ENCODE measurements at regions of chr12 and their contacts with region 1.

Region 1: GRCh38 chr12:42129595-42130204 is 15.0 kb downstream of the GXYLT1 start:
- DNase-seq: peak; percentile 31 to 60 (median 47)
- ATAC-seq: peak; percentile 82
- H3K4me3 ChIP-seq: no peak overlapping the region
- H3K27ac ChIP-seq: no peak overlapping the region
- H3K4me1 ChIP-seq: peaks cover 19% of the 10 kb centered on the region
- H3K27me3 ChIP-seq: no peaks in the 10 kb centered on the region
- CTCF ChIP-seq: peak; percentile 46 to 92 (median 85)
- POLR2A ChIP-seq: no peak

Region 2: DNA sequence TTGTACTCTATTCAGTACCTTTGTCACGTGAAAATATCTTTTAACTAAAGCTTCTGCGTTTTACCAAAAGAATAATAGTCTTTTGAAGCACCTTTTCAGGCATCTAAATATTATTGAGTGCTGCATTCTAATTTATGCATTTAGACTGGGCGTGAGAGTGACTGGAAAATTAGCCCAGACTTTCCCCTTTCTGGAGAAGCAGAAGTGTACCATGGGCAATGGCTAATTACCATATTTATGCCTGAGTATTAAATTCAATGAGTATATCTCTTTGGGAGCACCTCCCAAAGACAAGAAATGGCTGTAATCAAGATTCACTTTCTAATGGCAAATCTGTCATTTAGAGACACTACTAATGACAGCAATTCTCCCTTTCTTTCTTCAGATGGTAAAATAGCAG is 1730.0 kb before region 1 on chr12:
- intact Hi-C with region 1: no loop called
- DNase-seq: no peak
- ATAC-seq: no peak
- H3K4me3 ChIP-seq: no peak overlapping the region
- H3K27ac ChIP-seq: no peak overlapping the region
- H3K4me1 ChIP-seq: peaks cover 8% of the 10 kb centered on the region
- H3K27me3 ChIP-seq: no peaks in the 10 kb centered on the region
- CTCF ChIP-seq: no peak
- POLR2A ChIP-seq: no peak

Region 3: DNA sequence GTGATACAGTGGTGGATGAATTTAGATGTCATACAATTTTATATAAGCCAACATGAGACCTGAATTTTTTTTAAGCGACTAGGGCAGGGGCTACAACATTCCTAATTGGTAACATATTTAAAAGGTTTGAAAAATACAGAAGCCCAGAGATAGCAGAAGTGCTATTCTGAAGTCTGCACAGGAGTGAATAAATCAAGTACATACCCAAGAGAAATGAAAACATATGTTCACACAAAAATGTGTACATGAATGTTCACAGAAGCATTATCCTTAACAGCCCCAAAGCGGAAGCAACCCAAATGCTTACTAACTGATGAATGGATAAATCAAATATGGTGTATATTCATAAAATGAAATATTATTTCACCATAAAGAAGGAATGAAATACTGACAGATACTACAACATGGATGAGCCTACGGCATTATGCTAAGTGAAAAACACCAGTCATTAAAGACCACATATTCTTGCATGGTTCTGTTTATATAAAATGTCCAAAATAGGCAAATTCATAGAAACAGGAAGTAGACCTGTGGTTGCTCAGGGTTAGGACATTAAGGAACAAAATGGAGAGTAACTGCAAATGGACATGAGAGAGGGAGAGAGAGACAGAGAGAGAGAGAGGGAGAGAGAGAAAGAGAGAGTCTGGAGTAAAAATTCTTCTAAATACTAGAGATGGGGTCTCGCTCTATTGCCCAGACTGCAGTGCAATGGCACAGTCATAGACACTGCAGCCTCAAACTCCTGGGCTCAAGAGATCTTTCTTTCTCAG is 42.9 kb after region 1 on chr12:
- intact Hi-C with region 1: no loop called
- DNase-seq: no peak
- ATAC-seq: no peak
- H3K4me3 ChIP-seq: no peak overlapping the region
- H3K27ac ChIP-seq: no peak overlapping the region
- H3K4me1 ChIP-seq: no peaks in the 10 kb centered on the region
- H3K27me3 ChIP-seq: no peaks in the 10 kb centered on the region
- CTCF ChIP-seq: no peak
- POLR2A ChIP-seq: no peak

Region 4: GRCh38 chr12:42325653-42326474 is 196.2 kb after region 1 on chr12 and contains the starts of genes PPHLN1 and ZCRB1:
- intact Hi-C with region 1: loop called (anchors 5 kb)
- DNase-seq: peak; percentile 74 to 86 (median 74)
- ATAC-seq: peak; percentile 84
- H3K4me3 ChIP-seq: peak within 1 kb of the TSS; percentile 13 to 85
- H3K27ac ChIP-seq: peak within 1 kb of the TSS; percentile 57 to 84 (median 74)
- H3K4me1 ChIP-seq: peaks cover 44% of the 10 kb centered on the region
- H3K27me3 ChIP-seq: no peaks in the 10 kb centered on the region
- CTCF ChIP-seq: peak in 1 of 7 experiments; percentile 17
- POLR2A ChIP-seq: peak; percentile 42 to 80 (median 77)
- total RNA-seq, gene PPHLN1: 20.8 to 30.1 TPM
- total RNA-seq, gene ZCRB1: 32.2 to 80.8 TPM

Measured in body of pancreas (tissue), 4 donors.